Activated CD4-positive, alpha-beta T cell treated with anti-CD3 and anti-CD28 coated beads for 36 hours (primary cell): ENCODE measurements at regions of chr6 and their contacts with region 1.

Region 1: GRCh38 chr6:30821862-30822782 is 62.2 kb upstream of the DDR1 start:
- DNase-seq: no peak
- ATAC-seq: no peak
- H3K4me3 Mint-ChIP-seq: no peak overlapping the region
- H3K27ac Mint-ChIP-seq: peak overlapping the region; percentile 70
- H3K4me1 Mint-ChIP-seq: peaks cover 74% of the 10 kb centered on the region
- H3K27me3 Mint-ChIP-seq: no peaks in the 10 kb centered on the region

Region 2: DNA sequence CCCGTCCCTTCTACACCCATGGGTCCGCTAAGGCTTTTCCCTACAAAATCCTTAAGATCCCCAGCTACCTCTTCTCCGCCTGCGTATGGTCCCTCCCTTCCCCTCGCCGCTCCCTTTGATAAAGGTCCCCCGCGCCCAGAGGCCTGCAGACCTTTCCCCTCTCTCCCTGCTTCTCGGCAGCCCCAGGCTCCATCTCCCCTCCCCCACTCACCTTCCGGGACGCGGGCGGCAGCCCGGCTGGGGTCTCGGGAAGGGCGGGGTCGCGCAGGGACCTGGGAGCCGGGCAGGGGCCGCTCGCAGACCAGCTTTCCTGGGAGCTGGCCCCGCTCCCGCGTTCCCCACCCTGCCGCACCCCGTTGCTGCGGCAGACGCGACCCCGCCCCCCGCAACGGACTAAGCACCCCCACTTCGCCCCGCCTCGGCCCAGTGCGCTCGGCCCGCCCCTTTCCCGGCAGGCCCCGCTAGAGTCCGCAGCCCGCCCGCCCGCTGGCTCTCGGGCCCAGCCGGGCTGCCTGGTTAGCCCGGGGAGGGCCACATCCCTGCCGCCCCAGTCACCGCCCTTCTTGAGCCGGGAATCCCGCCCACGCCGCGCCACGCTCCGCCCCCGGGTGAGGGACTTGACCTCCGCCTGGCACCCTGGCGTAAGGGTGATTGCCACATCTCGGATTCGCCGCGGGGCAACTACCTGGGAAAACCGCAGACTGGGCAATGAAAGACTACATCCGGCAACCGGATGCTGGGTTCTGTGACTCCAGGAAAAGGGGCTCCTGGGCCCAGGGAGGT is 79.6 kb before region 1 on chr6 and contains the start of gene FLOT1:
- CTCF ChIA-PET with region 1: interaction called, 46 read pairs
- POLR2A ChIA-PET with region 1: interaction called, 5 read pairs
- intact Hi-C with region 1: loop called in 1 of 2 experiments (anchors 1 kb)
- DNase-seq: peak; percentile 98
- ATAC-seq: peak; percentile 74
- H3K4me3 Mint-ChIP-seq: peak within 1 kb of the TSS; percentile 96
- H3K27ac Mint-ChIP-seq: peak within 1 kb of the TSS; percentile 95
- H3K4me1 Mint-ChIP-seq: peaks cover 67% of the 10 kb centered on the region
- H3K27me3 Mint-ChIP-seq: no peaks in the 10 kb centered on the region
- total RNA-seq, gene FLOT1: 155 to 188 TPM

Region 3: GRCh38 chr6:30787954-30788353 is 34.2 kb before region 1 on chr6:
- CTCF ChIA-PET with region 1: interaction called, 8 read pairs
- POLR2A ChIA-PET with region 1: interaction called, 5 read pairs
- intact Hi-C with region 1: loop called in 1 of 2 experiments (anchors 1 kb)
- DNase-seq: peak; percentile 75
- ATAC-seq: peak; percentile 73
- H3K4me3 Mint-ChIP-seq: peak overlapping the region; percentile 59
- H3K27ac Mint-ChIP-seq: peak overlapping the region; percentile 96
- H3K4me1 Mint-ChIP-seq: peaks cover 67% of the 10 kb centered on the region
- H3K27me3 Mint-ChIP-seq: no peaks in the 10 kb centered on the region

Region 4: DNA sequence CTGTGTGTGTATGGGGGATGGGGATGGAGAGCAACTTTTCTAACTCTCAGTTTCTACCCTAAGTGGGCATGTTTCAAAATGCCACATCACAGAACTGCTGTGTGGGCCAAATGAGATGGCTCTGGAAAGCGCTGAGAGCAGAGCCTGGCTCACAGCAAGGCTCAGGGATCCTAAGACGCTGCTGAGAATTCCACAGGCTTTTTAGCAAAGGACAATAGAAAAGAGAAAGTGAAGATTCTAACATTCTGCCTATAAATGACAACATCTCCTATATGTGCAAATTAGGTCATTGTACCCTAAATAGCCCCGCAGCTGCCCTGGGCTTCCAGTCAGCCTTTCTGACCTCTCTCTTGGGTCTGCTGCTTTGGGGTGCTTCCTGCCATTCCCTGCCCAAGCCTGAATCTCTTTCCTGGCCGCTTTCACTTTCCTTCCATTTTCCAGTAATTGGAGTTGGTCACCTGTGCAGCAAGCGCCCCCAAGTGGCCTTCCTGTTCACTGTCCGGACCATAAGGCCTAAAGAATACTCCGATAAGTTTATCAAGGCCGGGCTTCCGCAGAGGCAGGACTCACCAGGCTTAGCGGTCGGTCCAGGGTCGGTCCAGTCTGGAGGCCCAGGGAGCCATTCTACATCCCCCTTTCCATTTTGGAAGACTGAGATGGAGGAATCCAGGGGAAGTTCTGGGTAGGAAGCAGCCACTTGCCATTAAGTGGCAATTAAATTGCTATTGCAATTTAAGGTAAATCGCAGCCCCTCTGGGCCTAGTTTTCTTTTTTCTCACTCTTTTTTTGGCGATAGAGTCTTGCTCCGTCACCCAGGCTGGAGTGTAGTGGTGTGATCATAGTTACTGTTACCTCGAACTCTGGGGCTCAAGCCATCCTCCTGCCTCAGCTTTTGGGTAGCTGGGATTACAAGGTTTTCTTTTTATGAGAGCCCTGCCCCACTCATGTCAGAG is 55.6 kb after region 1 on chr6:
- CTCF ChIA-PET with region 1: interaction called, 14 read pairs
- POLR2A ChIA-PET with region 1: no interaction called
- intact Hi-C with region 1: no loop called
- DNase-seq: peak; percentile 86
- ATAC-seq: peak; percentile 84
- H3K4me3 Mint-ChIP-seq: peak overlapping the region; percentile 64
- H3K27ac Mint-ChIP-seq: peak overlapping the region; percentile 85
- H3K4me1 Mint-ChIP-seq: peaks cover 24% of the 10 kb centered on the region
- H3K27me3 Mint-ChIP-seq: no peaks in the 10 kb centered on the region

Region 5: DNA sequence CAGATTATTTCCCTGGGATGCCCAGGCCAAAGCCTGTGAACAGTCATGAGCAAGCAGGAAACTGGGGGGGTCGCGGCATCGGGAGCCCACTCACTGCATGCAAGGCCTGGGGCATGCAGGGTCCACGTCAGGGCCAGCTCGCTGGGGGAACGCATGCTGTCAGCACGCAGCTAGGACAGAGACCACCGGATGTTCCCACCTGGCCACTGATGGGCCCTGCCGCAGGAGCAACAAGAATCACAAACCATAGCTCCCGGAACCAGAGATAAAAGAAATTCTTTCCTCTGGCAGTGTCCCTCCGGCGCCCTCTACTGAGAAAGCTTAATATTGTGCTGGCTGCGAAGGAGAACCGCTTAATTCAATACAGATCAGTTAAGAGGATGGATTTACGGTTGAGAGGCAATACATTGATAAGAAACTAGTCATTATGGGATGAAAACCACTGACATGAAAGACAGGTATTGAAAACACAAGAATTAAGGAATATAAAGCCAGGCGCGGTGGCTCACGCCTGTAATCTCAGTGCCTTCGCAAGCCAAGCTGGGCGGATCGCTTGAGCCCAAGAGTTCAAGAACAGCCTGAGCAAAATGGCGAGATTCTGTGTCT is 257.6 kb after region 1 on chr6:
- CTCF ChIA-PET with region 1: interaction called, 22 read pairs
- POLR2A ChIA-PET with region 1: interaction called, 3 read pairs
- intact Hi-C with region 1: no loop called
- DNase-seq: peak; percentile 82
- ATAC-seq: peak; percentile 91
- H3K4me3 Mint-ChIP-seq: peak overlapping the region; percentile 49
- H3K27ac Mint-ChIP-seq: no peak overlapping the region
- H3K4me1 Mint-ChIP-seq: peaks cover 13% of the 10 kb centered on the region
- H3K27me3 Mint-ChIP-seq: no peaks in the 10 kb centered on the region